ENCODE measurements at regions of chr10 and their contacts with region 1.

Region 1: DNA sequence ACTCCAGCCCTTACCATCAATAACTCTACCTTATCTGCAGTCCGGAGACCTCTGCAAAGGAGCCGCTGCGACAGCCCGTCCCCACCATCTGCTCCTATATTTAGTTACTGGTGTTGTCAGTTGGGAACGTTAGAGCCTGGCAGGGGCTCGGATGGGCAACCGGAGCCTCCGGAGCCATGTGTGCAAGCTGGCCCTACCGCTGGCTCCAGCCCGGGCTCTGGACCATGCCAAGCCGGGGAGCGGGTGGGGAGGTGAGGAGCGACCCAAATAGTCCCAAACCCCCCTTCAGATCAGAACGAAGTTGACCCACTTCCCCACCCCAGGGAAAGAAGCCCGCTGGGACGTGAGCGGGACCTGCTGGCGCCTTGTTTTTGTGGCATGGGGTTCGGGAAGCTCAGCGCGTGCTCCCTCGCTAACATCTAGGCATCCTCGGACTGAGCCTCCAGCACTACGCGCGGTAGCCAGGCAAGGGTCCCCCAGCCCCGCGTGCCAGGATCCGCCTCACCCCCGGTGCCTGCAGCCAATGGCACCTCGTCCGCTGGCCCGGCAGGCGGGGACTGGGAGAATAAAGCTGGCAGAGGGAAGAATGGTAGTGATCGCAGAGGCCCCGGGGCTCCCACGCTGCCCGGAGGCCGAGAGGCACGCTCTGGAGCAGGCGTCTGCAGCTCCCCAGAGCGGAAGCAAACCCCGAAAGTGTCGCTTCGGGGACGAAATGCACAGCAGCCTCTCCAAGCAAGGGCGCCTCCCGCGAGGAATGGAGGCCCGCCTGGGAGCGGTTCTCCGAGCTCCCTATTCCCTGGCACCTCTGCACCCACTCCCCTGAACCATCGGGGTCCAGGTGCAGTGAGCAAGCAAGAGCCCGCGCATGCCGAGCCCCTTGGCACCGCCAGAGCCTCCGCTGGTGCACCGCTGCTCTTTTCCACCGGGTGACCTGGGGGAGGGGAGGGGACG is 679 bp downstream of the LRRC20 start:
- DNase-seq: no peak
- ATAC-seq: peak; percentile 61
- H3K4me3 ChIP-seq: peak overlapping the region; percentile 86
- H3K27ac ChIP-seq: peak overlapping the region; percentile 42
- H3K4me1 ChIP-seq: peaks cover 10% of the 10 kb centered on the region
- H3K27me3 ChIP-seq: no peaks in the 10 kb centered on the region
- CTCF ChIP-seq: no peak; a peak in 1 of 6 replicates
- EP300 ChIP-seq: no peak
- POLR2A ChIP-seq: no peak
- RAD21 ChIP-seq: no peak

Region 2: GRCh38 chr10:70404036-70404786 is 22.5 kb after region 1 on chr10 and contains the start of gene EIF4EBP2:
- CTCF ChIA-PET with region 1: interaction called, 22 read pairs
- POLR2A ChIA-PET with region 1: interaction called, 6 read pairs
- RAD21 ChIA-PET with region 1: interaction called, 3 read pairs
- SMC1A ChIA-PET with region 1: interaction called, 8 read pairs
- in situ Hi-C with region 1: no loop called
- intact Hi-C with region 1: no loop called
- DNase-seq: peak; percentile 89
- ATAC-seq: peak; percentile 91
- H3K4me3 ChIP-seq: peak within 1 kb of the TSS; percentile 79
- H3K27ac ChIP-seq: peak within 1 kb of the TSS; percentile 73
- H3K4me1 ChIP-seq: peaks cover 14% of the 10 kb centered on the region
- H3K27me3 ChIP-seq: no peaks in the 10 kb centered on the region
- CTCF ChIP-seq: no peak
- EP300 ChIP-seq: no peak
- POLR2A ChIP-seq: peak; percentile 96
- RAD21 ChIP-seq: no peak
- polyA plus RNA-seq, gene EIF4EBP2: 14.4 to 20.4 TPM